ENCODE measurements at regions of chr3 and their contacts with region 1.

Region 1: DNA sequence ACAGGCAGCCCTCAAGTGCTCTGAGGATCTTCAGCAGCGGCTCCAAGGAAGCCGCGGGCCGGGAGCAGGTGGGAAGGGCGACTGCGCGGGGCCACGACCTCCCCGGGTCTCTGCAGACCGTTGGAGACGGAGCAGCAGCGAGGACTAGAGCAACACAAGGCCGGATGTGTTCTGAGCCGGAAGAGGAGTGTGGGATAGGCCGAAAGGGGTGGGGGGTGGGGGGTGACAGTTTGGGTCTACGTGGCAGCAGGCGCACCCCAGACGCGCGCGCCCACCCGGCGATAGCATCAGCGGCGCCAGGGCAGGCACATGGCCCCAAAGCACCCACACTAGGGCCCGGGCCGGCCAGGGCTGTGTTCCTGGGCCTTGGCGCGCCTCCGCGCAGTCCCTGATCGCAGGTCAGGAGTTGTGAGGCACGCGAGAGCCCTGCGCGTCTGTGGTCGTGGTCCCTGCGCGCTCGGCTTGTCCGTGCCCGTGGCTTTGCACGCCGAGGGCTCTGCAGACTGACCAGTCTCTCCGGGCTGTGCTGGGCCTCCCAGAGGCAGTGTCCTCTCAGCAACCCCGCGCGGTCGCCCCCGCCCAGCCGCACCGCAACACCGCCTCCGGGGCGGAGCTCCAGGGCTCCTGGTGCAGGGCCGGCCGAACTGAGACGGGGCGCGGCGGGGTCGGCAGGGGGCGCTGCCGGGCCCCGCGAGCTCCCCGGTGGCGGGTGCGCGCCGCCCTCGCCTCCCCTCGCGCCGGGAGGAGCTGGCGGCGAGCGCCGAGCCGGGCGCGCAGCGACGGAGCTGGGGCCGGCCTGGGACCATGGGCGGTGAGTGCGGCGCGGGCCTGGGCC is at the start of gene PXYLP1:
- DNase-seq: peak; percentile 71 to 98
- H3K4me3 ChIP-seq: peak within 1 kb of the TSS; percentile 88
- H3K27ac ChIP-seq: peak within 1 kb of the TSS; percentile 58
- H3K4me1 ChIP-seq: peaks cover 13% of the 10 kb centered on the region
- H3K27me3 ChIP-seq: no peaks in the 10 kb centered on the region
- CTCF ChIP-seq: peak; percentile 51; the same call in 1 of the 2 replicates
- total RNA-seq, gene PXYLP1: 7.8 and 11.1 TPM in 2 replicates

Region 2: GRCh38 chr3:140344082-140344454 is 887.2 kb before region 1 on chr3:
- CTCF ChIA-PET with region 1: no interaction called
- POLR2A ChIA-PET with region 1: interaction called, 16 read pairs
- intact Hi-C with region 1: no loop called
- DNase-seq: no peak
- H3K4me3 ChIP-seq: no peak overlapping the region
- H3K27ac ChIP-seq: no peak overlapping the region
- H3K4me1 ChIP-seq: peaks cover 10% of the 10 kb centered on the region; the same call in 1 of the 2 replicates
- H3K27me3 ChIP-seq: no peaks in the 10 kb centered on the region
- CTCF ChIP-seq: no peak

Region 3: GRCh38 chr3:141266797-141267555 is 35.7 kb after region 1 on chr3:
- CTCF ChIA-PET with region 1: no interaction called
- POLR2A ChIA-PET with region 1: no interaction called
- intact Hi-C with region 1: no loop called
- DNase-seq: no peak
- H3K4me3 ChIP-seq: no peak overlapping the region
- H3K27ac ChIP-seq: no peak overlapping the region
- H3K4me1 ChIP-seq: peaks cover 10% of the 10 kb centered on the region; the same call in 1 of the 2 replicates
- H3K27me3 ChIP-seq: no peaks in the 10 kb centered on the region
- CTCF ChIP-seq: no peak

Region 4: DNA sequence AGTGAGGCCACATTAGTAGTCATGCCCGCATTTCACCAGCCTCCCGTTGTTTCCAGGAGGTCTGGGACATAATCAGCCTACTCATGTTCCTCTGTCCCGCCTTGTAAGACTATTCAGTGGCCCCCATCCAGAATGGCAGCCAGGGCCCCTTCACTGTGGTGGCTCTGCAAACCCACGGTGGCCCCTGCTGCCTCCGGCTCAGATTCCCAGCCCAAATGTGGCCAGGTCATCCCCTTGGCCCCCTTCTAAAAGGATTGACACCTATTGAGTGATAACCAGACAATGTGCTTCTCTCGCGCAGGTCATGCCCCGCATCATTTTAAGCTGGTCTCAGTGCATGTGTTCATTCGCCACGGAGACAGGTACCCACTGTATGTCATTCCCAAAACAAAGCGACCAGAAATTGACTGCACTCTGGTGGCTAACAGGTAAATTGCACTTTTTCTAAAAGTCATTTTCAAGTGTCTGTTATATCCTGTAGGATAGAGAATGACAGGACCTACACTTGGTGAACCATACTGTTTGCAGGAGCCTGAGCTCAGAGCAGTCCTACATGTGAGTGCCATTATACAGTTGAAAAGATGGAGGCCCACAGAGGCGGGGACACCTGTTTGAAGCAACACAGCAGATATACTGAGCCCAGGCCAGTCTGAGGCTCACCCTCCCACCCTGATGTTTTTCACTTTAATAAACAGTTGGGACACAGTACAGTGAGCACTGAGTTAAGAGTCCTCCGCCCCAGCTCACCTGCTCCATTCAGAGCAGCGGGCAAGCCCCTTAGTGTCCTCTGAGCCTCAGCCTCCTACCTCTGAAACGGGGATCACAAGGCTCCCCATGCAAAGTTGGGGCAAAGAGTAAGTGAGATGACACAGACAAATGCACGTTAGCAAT is 48.0 kb after region 1 on chr3:
- CTCF ChIA-PET with region 1: interaction called, 11 read pairs
- POLR2A ChIA-PET with region 1: no interaction called
- intact Hi-C with region 1: loop called (anchors 1 kb)
- DNase-seq: no peak
- H3K4me3 ChIP-seq: no peak overlapping the region
- H3K27ac ChIP-seq: no peak overlapping the region
- H3K4me1 ChIP-seq: peaks cover 44% of the 10 kb centered on the region
- H3K27me3 ChIP-seq: no peaks in the 10 kb centered on the region
- CTCF ChIP-seq: peak; percentile 77

Region 5: GRCh38 chr3:141311496-141312353 is 80.4 kb after region 1 on chr3:
- CTCF ChIA-PET with region 1: interaction called, 19 read pairs
- POLR2A ChIA-PET with region 1: no interaction called
- intact Hi-C with region 1: no loop called
- DNase-seq: peak; percentile 89 to 99
- H3K4me3 ChIP-seq: peak overlapping the region; percentile 79
- H3K27ac ChIP-seq: no peak overlapping the region
- H3K4me1 ChIP-seq: peaks cover 7% of the 10 kb centered on the region
- H3K27me3 ChIP-seq: no peaks in the 10 kb centered on the region
- CTCF ChIP-seq: peak; percentile 73

Region 6: DNA sequence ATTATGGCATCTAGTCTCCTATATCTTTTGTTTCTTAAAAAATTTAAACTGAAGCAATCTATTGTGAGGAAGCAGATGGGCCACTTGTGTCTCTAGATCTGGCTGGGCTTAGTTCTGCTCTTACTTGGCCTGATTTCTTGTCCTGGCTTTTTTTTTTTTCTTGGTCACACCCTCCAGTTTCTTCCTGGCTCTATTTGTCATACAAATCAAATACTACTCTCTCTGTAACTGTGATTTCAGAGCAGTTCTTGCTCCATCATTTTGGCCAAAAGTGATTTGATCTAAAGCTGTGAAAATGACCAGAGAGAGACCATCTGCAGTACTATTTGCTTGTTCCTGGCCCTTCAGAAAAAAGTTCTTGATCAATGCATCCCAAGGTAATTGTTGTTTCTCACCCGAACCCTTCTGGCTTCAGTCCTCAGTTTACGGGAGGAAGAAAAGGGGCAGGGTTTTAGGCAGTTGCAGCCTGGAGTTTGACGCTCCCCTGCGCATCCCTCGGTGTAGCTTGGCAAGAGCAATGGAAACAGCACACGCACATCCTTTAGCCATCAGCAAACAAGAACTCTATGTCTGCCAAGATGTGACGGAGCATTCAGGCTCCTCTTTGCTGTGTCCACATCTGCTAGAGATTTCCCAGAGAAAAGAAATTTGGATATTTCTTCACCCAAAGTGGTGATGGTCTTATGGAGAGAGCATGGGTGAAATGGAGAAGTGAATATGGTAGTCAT is 1919.8 kb after region 1 on chr3:
- CTCF ChIA-PET with region 1: no interaction called
- POLR2A ChIA-PET with region 1: interaction called, 12 read pairs
- intact Hi-C with region 1: no loop called
- DNase-seq: no peak
- H3K4me3 ChIP-seq: no peak overlapping the region
- H3K27ac ChIP-seq: no peak overlapping the region
- H3K4me1 ChIP-seq: no peaks in the 10 kb centered on the region
- H3K27me3 ChIP-seq: no peaks in the 10 kb centered on the region
- CTCF ChIP-seq: no peak

Measured in PC-9 (cell line).